B cell (primary cell): ENCODE measurements at regions of chr9 and their contacts with region 1.

Region 1: GRCh38 chr9:123848447-123849085 is 81.4 kb downstream of the DENND1A start:
- DNase-seq: no peak
- ATAC-seq: no peak
- H3K4me3 ChIP-seq: no peak overlapping the region
- H3K4me3 Mint-ChIP-seq: no peak overlapping the region
- H3K27ac ChIP-seq: no peak overlapping the region
- H3K27ac Mint-ChIP-seq: no peak overlapping the region
- H3K4me1 ChIP-seq: no peaks in the 10 kb centered on the region
- H3K4me1 Mint-ChIP-seq: no peaks in the 10 kb centered on the region
- H3K27me3 ChIP-seq: no peaks in the 10 kb centered on the region
- H3K27me3 Mint-ChIP-seq: no peaks in the 10 kb centered on the region
- CTCF ChIP-seq: no peak

Region 2: GRCh38 chr9:123784518-123784917 is 64.0 kb before region 1 on chr9:
- CTCF ChIA-PET with region 1: no interaction called
- POLR2A ChIA-PET with region 1: no interaction called
- intact Hi-C with region 1: loop called (anchors 10 kb)
- DNase-seq: no peak
- ATAC-seq: no peak
- H3K4me3 ChIP-seq: no peak overlapping the region
- H3K4me3 Mint-ChIP-seq: no peak overlapping the region
- H3K27ac ChIP-seq: no peak overlapping the region
- H3K27ac Mint-ChIP-seq: no peak overlapping the region
- H3K4me1 ChIP-seq: no peaks in the 10 kb centered on the region
- H3K4me1 Mint-ChIP-seq: no peaks in the 10 kb centered on the region
- H3K27me3 ChIP-seq: no peaks in the 10 kb centered on the region
- H3K27me3 Mint-ChIP-seq: no peaks in the 10 kb centered on the region
- CTCF ChIP-seq: no peak